ENCODE measurements at regions of chr3 and their contacts with region 1.

Region 1: DNA sequence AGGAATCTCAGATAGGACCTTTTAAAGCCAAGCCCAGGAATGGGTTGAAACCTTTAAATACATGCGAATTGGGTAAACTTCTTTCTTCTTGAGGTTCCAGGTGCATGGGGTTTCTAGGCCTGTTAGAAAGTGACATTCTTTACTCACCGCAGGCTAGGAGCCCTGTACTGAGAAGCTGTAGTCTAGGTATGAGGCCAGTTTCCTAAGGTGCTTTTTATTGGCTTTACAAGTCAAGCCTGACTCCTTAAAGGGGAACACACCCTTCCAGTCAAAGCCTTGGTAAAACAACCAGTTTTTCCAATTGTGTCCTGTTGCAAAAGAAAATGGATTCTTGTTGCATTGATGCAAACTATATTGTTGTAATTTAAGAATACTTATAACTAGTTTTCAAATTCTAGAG is 76.1 kb upstream of the ATP11B start:
- DNase-seq: no peak
- H3K4me3 ChIP-seq: no peak overlapping the region
- H3K27ac ChIP-seq: no peak overlapping the region
- H3K4me1 ChIP-seq: no peaks in the 10 kb centered on the region
- H3K27me3 ChIP-seq: no peaks in the 10 kb centered on the region
- CTCF ChIP-seq: no peak

Region 2: GRCh38 chr3:182501856-182502255 is 215.4 kb before region 1 on chr3:
- intact Hi-C with region 1: no loop called
- DNase-seq: no peak
- H3K4me3 ChIP-seq: no peak overlapping the region
- H3K27ac ChIP-seq: no peak overlapping the region
- H3K4me1 ChIP-seq: no peaks in the 10 kb centered on the region
- H3K27me3 ChIP-seq: no peaks in the 10 kb centered on the region
- CTCF ChIP-seq: no peak

Region 3: DNA sequence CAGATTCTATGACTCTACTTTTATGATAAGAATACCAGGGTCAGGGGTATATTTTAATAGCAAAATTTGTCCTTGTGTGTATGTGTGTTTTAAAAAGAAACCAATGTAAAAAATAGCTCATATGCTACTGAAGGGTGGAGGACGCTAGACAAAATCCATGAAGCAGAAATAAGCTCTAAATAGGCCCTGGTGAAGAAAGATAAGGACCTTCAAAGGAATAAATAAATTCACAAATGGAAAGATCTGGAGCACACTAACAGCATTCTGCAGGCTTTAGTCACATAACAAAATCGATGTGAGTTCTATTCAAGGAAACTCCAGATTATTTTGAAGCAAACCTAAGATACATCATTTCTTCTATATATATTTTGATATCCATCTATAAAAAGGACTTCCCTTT is 48.9 kb after region 1 on chr3:
- intact Hi-C with region 1: no loop called
- DNase-seq: no peak
- H3K4me3 ChIP-seq: no peak overlapping the region
- H3K27ac ChIP-seq: no peak overlapping the region
- H3K4me1 ChIP-seq: no peaks in the 10 kb centered on the region
- H3K27me3 ChIP-seq: no peaks in the 10 kb centered on the region
- CTCF ChIP-seq: no peak

Region 4: GRCh38 chr3:182837855-182838454 is 120.7 kb after region 1 on chr3:
- intact Hi-C with region 1: loop called (anchors 5 kb)
- DNase-seq: no peak
- H3K4me3 ChIP-seq: no peak overlapping the region
- H3K27ac ChIP-seq: no peak overlapping the region
- H3K4me1 ChIP-seq: no peaks in the 10 kb centered on the region
- H3K27me3 ChIP-seq: no peaks in the 10 kb centered on the region
- CTCF ChIP-seq: peak; percentile 41

Measured in tibial artery (tissue), 4 donors.